ENCODE measurements at regions of chr10 and their contacts with region 1.

Region 1: GRCh38 chr10:15223174-15223573 is 54.7 kb upstream of the NMT2 start:
- DNase-seq: no peak
- H3K4me3 ChIP-seq: no peak overlapping the region
- H3K27ac ChIP-seq: no peak overlapping the region
- H3K4me1 ChIP-seq: no peaks in the 10 kb centered on the region
- H3K27me3 ChIP-seq: no peaks in the 10 kb centered on the region
- CTCF ChIP-seq: no peak

Region 2: DNA sequence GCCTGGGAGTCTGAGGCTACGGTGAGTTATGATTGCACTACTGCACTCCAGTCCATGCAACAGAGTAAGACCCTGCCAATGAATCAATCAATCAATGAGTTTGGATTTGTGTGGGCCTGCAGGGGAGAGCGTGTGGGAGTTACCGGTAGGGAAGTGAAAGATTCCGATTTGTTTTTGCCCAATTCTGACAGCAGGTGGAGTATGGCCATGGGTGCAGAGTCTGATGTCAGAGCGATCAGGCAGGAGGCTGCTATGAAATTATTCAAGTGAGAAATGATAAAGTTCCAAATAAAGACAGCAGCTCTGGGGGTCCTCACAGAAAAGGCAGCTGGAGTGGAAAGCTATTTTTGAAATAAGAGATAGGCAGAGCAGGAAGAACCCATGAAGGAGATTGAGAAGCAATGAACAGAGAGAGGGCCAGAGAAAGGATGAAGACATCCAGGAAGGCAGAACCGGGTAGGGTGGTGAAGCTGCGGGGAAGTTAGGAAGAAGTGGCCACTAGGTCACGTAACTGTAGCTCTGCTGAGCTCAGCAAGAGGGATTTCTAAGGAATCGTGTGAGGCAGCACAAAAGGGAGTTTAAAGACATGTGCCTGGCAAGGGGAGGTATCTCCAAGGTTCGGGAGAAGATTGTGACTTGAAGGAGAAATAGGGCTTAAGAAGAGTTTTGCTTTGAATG is 39.0 kb after region 1 on chr10:
- intact Hi-C with region 1: loop called (anchors 5 kb)
- DNase-seq: peak; percentile 39
- H3K4me3 ChIP-seq: no peak overlapping the region
- H3K27ac ChIP-seq: no peak overlapping the region
- H3K4me1 ChIP-seq: no peaks in the 10 kb centered on the region
- H3K27me3 ChIP-seq: no peaks in the 10 kb centered on the region
- CTCF ChIP-seq: peak; percentile 27